CD8-positive, alpha-beta T cell (primary cell): ENCODE measurements at regions of chr4 and their contacts with region 1.

Region 1: DNA sequence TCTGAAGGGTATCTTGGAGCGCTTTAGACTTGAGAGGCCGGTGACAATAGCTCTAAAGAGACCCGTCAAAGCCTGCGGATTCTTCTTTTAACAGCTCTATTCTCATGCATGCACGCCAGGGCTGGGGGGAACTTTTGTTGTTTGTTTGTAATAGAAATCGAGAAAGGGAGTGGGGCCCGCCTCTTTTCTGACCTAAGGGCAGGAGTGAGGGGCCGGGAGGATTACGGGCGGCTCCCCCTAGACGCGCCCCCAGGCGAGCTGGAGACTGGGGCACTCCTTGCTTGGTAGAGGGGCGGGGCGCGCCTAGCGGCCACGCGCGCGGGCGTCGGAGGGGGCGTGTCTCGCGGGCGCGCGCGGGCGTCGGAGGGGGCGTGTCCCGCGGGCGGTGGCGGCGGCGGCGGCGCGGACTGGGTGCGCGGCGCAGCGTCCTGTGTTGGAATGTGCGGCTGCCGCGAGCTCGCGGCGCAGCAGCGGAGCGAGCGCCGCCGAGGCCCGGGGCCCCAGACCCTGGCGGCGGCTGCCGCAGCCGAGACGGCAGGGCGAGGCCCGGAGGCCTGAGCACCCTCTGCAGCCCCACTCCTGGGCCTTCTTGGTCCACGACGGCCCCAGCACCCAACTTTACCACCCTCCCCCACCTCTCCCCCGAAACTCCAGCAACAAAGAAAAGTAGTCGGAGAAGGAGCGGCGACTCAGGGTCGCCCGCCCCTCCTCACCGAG is at the start of gene REST:
- DNase-seq: peak; percentile 74 to 91 (median 84)
- ATAC-seq: peak; percentile 67
- H3K4me3 ChIP-seq: peak within 1 kb of the TSS; percentile 64 to 92
- H3K4me3 Mint-ChIP-seq: peak within 1 kb of the TSS; percentile 97
- H3K27ac ChIP-seq: peak within 1 kb of the TSS; percentile 57 to 86
- H3K27ac Mint-ChIP-seq: peak within 1 kb of the TSS; percentile 95
- H3K4me1 ChIP-seq: peaks cover 43% of the 10 kb centered on the region
- H3K4me1 Mint-ChIP-seq: peaks cover 42% of the 10 kb centered on the region
- H3K27me3 ChIP-seq: no peaks in the 10 kb centered on the region
- H3K27me3 Mint-ChIP-seq: no peaks in the 10 kb centered on the region
- CTCF ChIP-seq: no peak
- total RNA-seq, gene REST: 58.9 to 60.7 TPM

Region 2: DNA sequence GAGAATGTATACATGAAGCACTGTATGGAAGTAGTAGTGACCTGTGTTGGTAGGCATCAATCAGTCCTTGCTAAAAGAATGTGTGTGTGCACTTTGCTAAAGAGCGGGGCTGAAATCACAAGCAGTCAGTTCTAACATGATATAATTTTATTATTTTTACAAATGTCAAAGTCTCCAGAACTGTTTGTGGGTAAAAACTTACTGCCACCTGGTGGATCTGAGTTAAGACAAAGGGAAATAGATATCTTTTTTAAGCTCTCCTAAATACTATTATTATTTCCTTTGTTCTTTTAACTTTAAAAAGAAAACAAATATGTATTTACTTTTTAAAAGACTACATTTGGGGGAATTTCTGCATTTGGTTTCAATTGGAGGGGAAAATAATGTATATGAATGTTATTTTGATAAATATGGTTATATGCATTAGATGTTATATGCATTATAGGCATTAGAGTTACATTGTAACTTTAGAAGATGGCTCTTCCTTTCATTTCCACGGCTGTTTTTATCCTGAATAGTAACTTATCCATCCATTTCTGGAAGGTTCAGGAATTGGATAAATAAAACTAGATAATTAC is 1353.1 kb before region 1 on chr4:
- CTCF ChIA-PET with region 1: no interaction called
- POLR2A ChIA-PET with region 1: no interaction called
- intact Hi-C with region 1: loop called (anchors 10 kb)
- DNase-seq: peak in 2 of 9 experiments; percentile 54 to 67
- ATAC-seq: peak; percentile 60
- H3K4me3 ChIP-seq: no peak overlapping the region
- H3K4me3 Mint-ChIP-seq: no peak overlapping the region
- H3K27ac ChIP-seq: no peak overlapping the region
- H3K27ac Mint-ChIP-seq: no peak overlapping the region
- H3K4me1 ChIP-seq: no peaks in the 10 kb centered on the region
- H3K4me1 Mint-ChIP-seq: peaks cover 7% of the 10 kb centered on the region
- H3K27me3 ChIP-seq: no peaks in the 10 kb centered on the region
- H3K27me3 Mint-ChIP-seq: peaks cover 24% of the 10 kb centered on the region
- CTCF ChIP-seq: peak; percentile 67

Region 3: GRCh38 chr4:56387023-56388001 is 520.3 kb before region 1 on chr4 and contains the start of gene AASDH:
- CTCF ChIA-PET with region 1: no interaction called
- POLR2A ChIA-PET with region 1: interaction called, 17 read pairs
- intact Hi-C with region 1: loop called (anchors 1 to 5 kb)
- DNase-seq: peak; percentile 91 to 99 (median 96)
- ATAC-seq: peak; percentile 88
- H3K4me3 ChIP-seq: peak within 1 kb of the TSS; percentile 79 to 82
- H3K4me3 Mint-ChIP-seq: peak within 1 kb of the TSS; percentile 97
- H3K27ac ChIP-seq: peak within 1 kb of the TSS; percentile 93 to 94
- H3K27ac Mint-ChIP-seq: peak within 1 kb of the TSS; percentile 99
- H3K4me1 ChIP-seq: peaks cover 21% of the 10 kb centered on the region
- H3K4me1 Mint-ChIP-seq: peaks cover 46% of the 10 kb centered on the region
- H3K27me3 ChIP-seq: no peaks in the 10 kb centered on the region
- H3K27me3 Mint-ChIP-seq: no peaks in the 10 kb centered on the region
- CTCF ChIP-seq: no peak
- total RNA-seq, gene AASDH: 9.1 to 9.8 TPM

Region 4: GRCh38 chr4:56530269-56531148 is 377.1 kb before region 1 on chr4:
- CTCF ChIA-PET with region 1: no interaction called
- POLR2A ChIA-PET with region 1: no interaction called
- intact Hi-C with region 1: loop called in 1 of 2 experiments (anchors 5 kb)
- DNase-seq: peak; percentile 51 to 86 (median 81)
- ATAC-seq: peak; percentile 96
- H3K4me3 ChIP-seq: peak overlapping the region; percentile 59 to 87
- H3K4me3 Mint-ChIP-seq: no peak overlapping the region
- H3K27ac ChIP-seq: no peak overlapping the region
- H3K27ac Mint-ChIP-seq: no peak overlapping the region
- H3K4me1 ChIP-seq: peaks cover 6% of the 10 kb centered on the region
- H3K4me1 Mint-ChIP-seq: no peaks in the 10 kb centered on the region
- H3K27me3 ChIP-seq: peaks cover 3 to 5% of the 10 kb centered on the region in 2 experiments
- H3K27me3 Mint-ChIP-seq: peaks cover 9% of the 10 kb centered on the region
- CTCF ChIP-seq: no peak

Region 5: GRCh38 chr4:56655209-56655626 is 252.4 kb before region 1 on chr4:
- CTCF ChIA-PET with region 1: no interaction called
- POLR2A ChIA-PET with region 1: no interaction called
- intact Hi-C with region 1: no loop called
- DNase-seq: peak in 5 of 9 experiments; percentile 17 to 62 (median 43)
- ATAC-seq: no peak
- H3K4me3 ChIP-seq: peak overlapping the region; percentile 61 to 78
- H3K4me3 Mint-ChIP-seq: peak overlapping the region; percentile 90
- H3K27ac ChIP-seq: peak overlapping the region in 1 of 2 experiments; percentile 73
- H3K27ac Mint-ChIP-seq: peak overlapping the region; percentile 41
- H3K4me1 ChIP-seq: peaks cover 28% of the 10 kb centered on the region
- H3K4me1 Mint-ChIP-seq: peaks cover 56% of the 10 kb centered on the region
- H3K27me3 ChIP-seq: no peaks in the 10 kb centered on the region
- H3K27me3 Mint-ChIP-seq: peaks cover 10% of the 10 kb centered on the region
- CTCF ChIP-seq: no peak

Region 6: GRCh38 chr4:56821381-56822243 is 86.0 kb before region 1 on chr4 and contains the start of gene SPINK2:
- CTCF ChIA-PET with region 1: no interaction called
- POLR2A ChIA-PET with region 1: no interaction called
- intact Hi-C with region 1: loop called (anchors 5 kb)
- DNase-seq: peak; percentile 41 to 88 (median 76)
- ATAC-seq: peak; percentile 87
- H3K4me3 ChIP-seq: peak within 1 kb of the TSS; percentile 58 to 65
- H3K4me3 Mint-ChIP-seq: peak within 1 kb of the TSS; percentile 81
- H3K27ac ChIP-seq: peak within 1 kb of the TSS; percentile 36
- H3K27ac Mint-ChIP-seq: peak within 1 kb of the TSS; percentile 27
- H3K4me1 ChIP-seq: peaks cover 34% of the 10 kb centered on the region
- H3K4me1 Mint-ChIP-seq: peaks cover 36% of the 10 kb centered on the region
- H3K27me3 ChIP-seq: no peaks in the 10 kb centered on the region
- H3K27me3 Mint-ChIP-seq: no peaks in the 10 kb centered on the region
- CTCF ChIP-seq: no peak
- total RNA-seq, gene SPINK2: 2.6 to 4.4 TPM